ENCODE measurements at regions of chr6 and their contacts with region 1.

Region 1: DNA sequence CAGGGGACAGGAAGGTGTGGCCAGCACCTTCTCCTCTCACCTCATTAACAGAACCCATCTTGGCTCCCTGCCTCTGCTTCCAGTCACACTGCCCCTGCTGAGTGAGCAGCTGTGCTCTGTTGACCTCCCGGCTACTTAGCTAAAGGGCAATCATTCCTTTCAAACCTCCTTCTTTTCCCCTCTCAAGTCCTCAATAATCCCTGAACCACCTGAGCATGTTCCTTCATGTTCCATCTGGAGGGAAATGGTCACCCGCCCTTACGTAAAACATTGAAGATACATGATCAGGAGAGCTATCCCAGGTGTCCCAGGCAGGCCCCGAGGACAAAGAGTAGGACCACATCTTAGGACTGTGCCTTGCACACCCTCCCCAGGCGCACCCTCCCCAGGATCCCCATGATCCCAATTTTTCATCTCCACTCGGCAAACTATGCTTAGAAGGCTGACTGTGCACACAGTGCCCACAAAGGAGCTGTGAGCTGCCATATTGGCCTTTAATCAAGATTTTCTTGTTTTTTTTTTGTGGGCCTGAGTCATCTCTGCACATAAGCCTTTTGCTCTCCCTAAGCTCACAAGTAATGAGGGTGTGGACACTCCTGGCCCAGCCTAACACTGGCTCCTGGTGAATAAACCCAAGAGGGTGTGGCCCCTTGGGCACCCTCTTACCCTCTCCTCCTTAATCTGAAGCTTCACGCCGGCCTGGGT is 21.8 kb upstream of the MRPS10 start:
- DNase-seq: peak; percentile 53
- ATAC-seq: peak; percentile 83
- H3K4me3 ChIP-seq: no peak overlapping the region
- H3K27ac ChIP-seq: peak overlapping the region; percentile 34; the same call in 1 of the 2 replicates
- H3K4me1 ChIP-seq: peaks cover 10% of the 10 kb centered on the region
- H3K27me3 ChIP-seq: no peaks in the 10 kb centered on the region
- CTCF ChIP-seq: no peak
- POLR2A ChIP-seq: no peak
- RAD21 ChIP-seq: no peak

Region 2: GRCh38 chr6:42996513-42996912 is 757.0 kb after region 1 on chr6:
- CTCF ChIA-PET with region 1: no interaction called
- POLR2A ChIA-PET with region 1: interaction called, 11 read pairs
- dilution Hi-C with region 1: no loop called
- in situ Hi-C with region 1: no loop called
- intact Hi-C with region 1: no loop called
- DNase-seq: no peak
- ATAC-seq: peak; percentile 35; the same call in 1 of the 2 replicates
- H3K4me3 ChIP-seq: no peak overlapping the region
- H3K27ac ChIP-seq: no peak overlapping the region
- H3K4me1 ChIP-seq: no peaks in the 10 kb centered on the region
- H3K27me3 ChIP-seq: no peaks in the 10 kb centered on the region
- CTCF ChIP-seq: peak; percentile 19; the same call in 1 of the 2 replicates
- POLR2A ChIP-seq: no peak
- RAD21 ChIP-seq: no peak